ENCODE measurements at regions of chr20 and their contacts with region 1.

Region 1: GRCh38 chr20:38337561-38338140 is 8.6 kb upstream of the LBP start:
- DNase-seq: peak; percentile 74
- ATAC-seq: peak; percentile 99
- H3K4me3 ChIP-seq: no peak overlapping the region
- H3K27ac ChIP-seq: no peak overlapping the region
- H3K4me1 ChIP-seq: no peaks in the 10 kb centered on the region
- H3K27me3 ChIP-seq: no peaks in the 10 kb centered on the region; the same call in 1 of the 2 replicates
- CTCF ChIP-seq: peak; percentile 95 to 96 (median 96)
- POLR2A ChIP-seq: no peak
- RAD21 ChIP-seq: peak; percentile 79

Region 2: DNA sequence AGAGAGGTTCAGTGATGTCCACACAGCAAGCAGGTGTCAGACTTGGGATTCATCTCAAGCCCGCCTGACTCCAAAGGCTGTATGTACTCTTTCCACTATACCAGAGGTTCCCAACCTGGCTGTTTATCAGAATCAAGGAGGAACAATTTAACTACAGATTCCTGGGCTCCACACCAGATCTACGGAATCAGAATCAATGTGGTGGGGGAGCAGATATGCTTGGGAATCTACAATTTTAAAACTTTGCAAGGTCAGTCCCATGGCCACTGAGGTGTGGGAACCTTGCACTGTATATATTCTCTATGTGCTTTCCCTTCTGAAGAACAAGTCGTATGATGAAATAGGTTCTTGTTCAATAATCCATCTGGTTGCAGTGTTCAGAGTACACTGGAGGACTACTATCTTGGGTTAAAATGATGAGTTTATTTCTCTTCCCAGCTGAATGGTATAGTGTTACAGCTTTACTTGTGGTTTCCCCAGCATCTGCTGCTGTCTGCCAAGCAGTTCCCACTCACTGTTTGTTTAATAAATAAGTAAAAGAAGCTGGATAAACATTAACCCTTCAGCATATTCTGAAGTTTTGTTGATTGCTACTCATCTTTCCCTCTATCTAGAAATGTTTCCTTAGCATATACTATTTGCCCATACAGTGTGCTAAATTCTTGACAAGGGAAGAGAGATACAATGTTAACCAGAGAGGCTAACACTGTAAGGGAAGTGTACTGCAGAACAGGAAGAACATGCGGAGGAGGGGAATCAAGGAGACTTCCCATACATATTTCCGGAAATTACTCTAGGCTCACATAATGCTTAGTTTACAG is 314.3 kb before region 1 on chr20:
- CTCF ChIA-PET with region 1: no interaction called
- POLR2A ChIA-PET with region 1: no interaction called
- RAD21 ChIA-PET with region 1: no interaction called
- intact Hi-C with region 1: no loop called
- DNase-seq: no peak
- ATAC-seq: no peak
- H3K4me3 ChIP-seq: no peak overlapping the region
- H3K27ac ChIP-seq: no peak overlapping the region
- H3K4me1 ChIP-seq: no peaks in the 10 kb centered on the region
- H3K27me3 ChIP-seq: no peaks in the 10 kb centered on the region
- CTCF ChIP-seq: no peak
- POLR2A ChIP-seq: no peak
- RAD21 ChIP-seq: no peak

Region 3: GRCh38 chr20:38412877-38413577 is 75.4 kb after region 1 on chr20:
- CTCF ChIA-PET with region 1: interaction called, 15 read pairs
- POLR2A ChIA-PET with region 1: no interaction called
- RAD21 ChIA-PET with region 1: interaction called, 3 read pairs
- intact Hi-C with region 1: loop called (anchors 1 kb)
- DNase-seq: no peak
- ATAC-seq: no peak
- H3K4me3 ChIP-seq: no peak overlapping the region
- H3K27ac ChIP-seq: no peak overlapping the region
- H3K4me1 ChIP-seq: no peaks in the 10 kb centered on the region; a peak in 1 of 4 replicates
- H3K27me3 ChIP-seq: no peaks in the 10 kb centered on the region
- CTCF ChIP-seq: no peak
- POLR2A ChIP-seq: no peak
- RAD21 ChIP-seq: no peak

Measured in HCT116 (cell line).